ENCODE measurements at regions of chr11 and their contacts with region 1.

Region 1: DNA sequence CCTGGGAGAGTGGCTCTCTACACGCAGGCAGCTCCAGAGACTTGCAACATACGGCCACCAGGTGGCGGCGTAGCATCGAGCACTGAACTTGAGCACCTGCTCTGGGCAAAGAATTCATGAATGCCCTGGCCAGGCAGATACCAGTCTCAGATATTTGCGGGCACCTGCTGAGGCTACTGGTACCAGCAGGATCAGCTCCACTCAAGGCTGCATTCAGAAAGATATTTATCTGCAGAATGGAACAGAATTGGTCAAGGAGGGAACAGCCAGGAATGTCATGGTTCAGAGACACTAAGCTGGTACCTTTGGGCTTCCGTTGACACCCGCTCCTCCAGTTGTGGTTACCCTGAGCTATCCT is 10.8 kb upstream of the CCDC86 start:
- DNase-seq: peak; percentile 76 to 96 (median 90)
- H3K4me3 ChIP-seq: no peak overlapping the region
- H3K27ac ChIP-seq: no peak overlapping the region
- H3K4me1 ChIP-seq: peaks cover 0 to 5% of the 10 kb centered on the region in 2 donors
- H3K27me3 ChIP-seq: no peaks in the 10 kb centered on the region
- CTCF ChIP-seq: peak; percentile 87 to 95 (median 90)
- POLR2A ChIP-seq: no peak

Region 2: GRCh38 chr11:60887556-60887955 is 56.4 kb after region 1 on chr11:
- intact Hi-C with region 1: loop called in 1 of 2 experiments (anchors 5 kb)
- DNase-seq: peak; percentile 45 to 78 (median 60)
- H3K4me3 ChIP-seq: no peak overlapping the region
- H3K27ac ChIP-seq: no peak overlapping the region
- H3K4me1 ChIP-seq: peaks cover 0 to 4% of the 10 kb centered on the region in 2 donors
- H3K27me3 ChIP-seq: no peaks in the 10 kb centered on the region
- CTCF ChIP-seq: peak; percentile 26 to 68 (median 53)
- POLR2A ChIP-seq: no peak

Region 3: GRCh38 chr11:60899046-60899936 is 68.2 kb after region 1 on chr11:
- intact Hi-C with region 1: loop called in 1 of 2 experiments (anchors 5 kb)
- DNase-seq: peak in 5 of 7 donors; percentile 28 to 76 (median 54)
- H3K4me3 ChIP-seq: no peak overlapping the region
- H3K27ac ChIP-seq: peak overlapping the region in 2 of 5 donors; percentile 3 to 40
- H3K4me1 ChIP-seq: peaks cover 3 to 7% of the 10 kb centered on the region in 2 donors
- H3K27me3 ChIP-seq: no peaks in the 10 kb centered on the region
- CTCF ChIP-seq: peak; percentile 86 to 96 (median 91)
- POLR2A ChIP-seq: no peak

Region 4: DNA sequence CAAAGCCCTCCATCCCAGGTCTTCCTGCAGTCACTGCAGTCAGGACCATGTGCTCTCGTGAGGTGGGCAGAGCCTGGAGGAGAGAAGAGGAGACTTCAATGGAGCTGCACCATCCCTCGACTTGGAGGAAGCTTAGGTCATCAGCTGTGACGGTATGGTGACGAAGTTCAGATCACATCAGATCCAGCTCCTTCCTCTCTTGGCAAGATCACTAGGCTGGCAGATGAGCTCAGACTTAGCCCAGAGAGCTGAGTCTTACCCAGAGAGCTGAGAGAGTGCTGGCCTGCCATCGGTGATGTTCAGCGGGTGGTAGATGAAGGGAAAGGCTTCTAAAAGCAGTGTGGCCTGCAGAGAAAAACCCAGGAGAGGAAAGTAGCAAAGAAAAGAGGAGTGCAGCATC is 122.6 kb after region 1 on chr11:
- intact Hi-C with region 1: no loop called
- DNase-seq: peak in 1 of 7 donors; percentile 31
- H3K4me3 ChIP-seq: no peak overlapping the region
- H3K27ac ChIP-seq: peak overlapping the region in 1 of 5 donors; percentile 91
- H3K4me1 ChIP-seq: no peaks in the 10 kb centered on the region
- H3K27me3 ChIP-seq: peaks cover 4% of the 10 kb centered on the region
- CTCF ChIP-seq: no peak
- POLR2A ChIP-seq: no peak

Region 5: GRCh38 chr11:61187505-61188130 is 356.5 kb after region 1 on chr11:
- intact Hi-C with region 1: loop called in 1 of 2 experiments (anchors 5 kb)
- DNase-seq: peak; percentile 62 to 93 (median 81)
- H3K4me3 ChIP-seq: no peak overlapping the region
- H3K27ac ChIP-seq: no peak overlapping the region
- H3K4me1 ChIP-seq: no peaks in the 10 kb centered on the region
- H3K27me3 ChIP-seq: peaks cover 5% of the 10 kb centered on the region
- CTCF ChIP-seq: peak; percentile 84 to 93 (median 92)
- POLR2A ChIP-seq: no peak

Measured in adrenal gland (tissue), 19 donors.